ENCODE measurements at regions of chr3 and their contacts with region 1.

Region 1: GRCh38 chr3:52820736-52821135 is 9.7 kb downstream of the ITIH4 start:
- DNase-seq: peak; percentile 41 to 84
- H3K4me3 ChIP-seq: no peak overlapping the region
- H3K27ac ChIP-seq: no peak overlapping the region
- H3K4me1 ChIP-seq: peaks cover 0 to 6% (median 3%) of the 10 kb centered on the region in 4 experiments; a peak in 2 of 7 replicates
- H3K27me3 ChIP-seq: no peaks in the 10 kb centered on the region
- CTCF ChIP-seq: peak in 2 of 3 experiments; percentile 90 to 98; a peak in 3 of 4 replicates
- EP300 ChIP-seq: no peak
- POLR2A ChIP-seq: no peak
- RAD21 ChIP-seq: peak; percentile 67 to 76

Region 2: DNA sequence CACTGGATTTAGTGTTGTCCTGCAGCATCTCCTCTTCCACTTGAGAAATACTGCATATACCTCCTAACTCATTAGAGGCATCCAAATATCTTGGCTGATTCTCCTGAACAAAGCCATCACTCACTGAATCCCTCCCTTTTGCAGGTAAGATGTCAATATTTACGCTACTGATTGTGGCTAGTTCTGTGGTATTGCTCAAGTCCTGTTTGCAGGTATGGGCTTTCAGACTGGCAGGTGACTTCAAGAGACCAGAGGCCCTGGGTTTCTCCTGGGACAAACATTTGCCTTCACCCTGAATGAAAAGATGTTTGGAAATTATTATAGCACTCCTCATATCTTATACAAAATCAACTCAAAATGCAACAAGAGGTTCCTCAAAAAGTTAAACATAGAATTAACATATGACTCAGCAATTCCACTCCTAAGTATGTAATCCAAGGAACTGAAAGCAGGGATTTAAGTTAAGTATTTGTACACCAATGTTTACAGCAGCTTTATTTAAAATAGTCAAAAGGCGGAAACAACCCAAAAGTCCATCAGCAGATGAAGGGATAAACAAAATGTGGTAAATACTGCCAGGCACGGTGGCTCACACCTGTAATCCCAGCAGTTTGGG is 68.6 kb before region 1 on chr3:
- CTCF ChIA-PET with region 1: interaction called, 10 read pairs
- POLR2A ChIA-PET with region 1: no interaction called
- DNase-seq: no peak
- H3K4me3 ChIP-seq: no peak overlapping the region
- H3K27ac ChIP-seq: no peak overlapping the region
- H3K4me1 ChIP-seq: no peaks in the 10 kb centered on the region
- H3K27me3 ChIP-seq: no peaks in the 10 kb centered on the region
- CTCF ChIP-seq: no peak
- EP300 ChIP-seq: no peak
- POLR2A ChIP-seq: no peak
- RAD21 ChIP-seq: no peak

Region 3: GRCh38 chr3:52792961-52793695 is 27.6 kb before region 1 on chr3:
- CTCF ChIA-PET with region 1: interaction called, 86 read pairs
- POLR2A ChIA-PET with region 1: no interaction called
- DNase-seq: no peak
- H3K4me3 ChIP-seq: no peak overlapping the region
- H3K27ac ChIP-seq: no peak overlapping the region
- H3K4me1 ChIP-seq: no peaks in the 10 kb centered on the region
- H3K27me3 ChIP-seq: no peaks in the 10 kb centered on the region
- CTCF ChIP-seq: no peak
- EP300 ChIP-seq: no peak
- POLR2A ChIP-seq: no peak
- RAD21 ChIP-seq: no peak

Region 4: GRCh38 chr3:52798978-52799476 is 21.7 kb before region 1 on chr3:
- CTCF ChIA-PET with region 1: interaction called, 86 read pairs
- POLR2A ChIA-PET with region 1: interaction called, 5 read pairs
- DNase-seq: peak; percentile 44 to 87
- H3K4me3 ChIP-seq: no peak overlapping the region
- H3K27ac ChIP-seq: no peak overlapping the region
- H3K4me1 ChIP-seq: no peaks in the 10 kb centered on the region
- H3K27me3 ChIP-seq: no peaks in the 10 kb centered on the region
- CTCF ChIP-seq: peak in 2 of 3 experiments; percentile 74 to 86; a peak in 3 of 4 replicates
- EP300 ChIP-seq: no peak
- POLR2A ChIP-seq: no peak
- RAD21 ChIP-seq: peak; percentile 60 to 64

Region 5: DNA sequence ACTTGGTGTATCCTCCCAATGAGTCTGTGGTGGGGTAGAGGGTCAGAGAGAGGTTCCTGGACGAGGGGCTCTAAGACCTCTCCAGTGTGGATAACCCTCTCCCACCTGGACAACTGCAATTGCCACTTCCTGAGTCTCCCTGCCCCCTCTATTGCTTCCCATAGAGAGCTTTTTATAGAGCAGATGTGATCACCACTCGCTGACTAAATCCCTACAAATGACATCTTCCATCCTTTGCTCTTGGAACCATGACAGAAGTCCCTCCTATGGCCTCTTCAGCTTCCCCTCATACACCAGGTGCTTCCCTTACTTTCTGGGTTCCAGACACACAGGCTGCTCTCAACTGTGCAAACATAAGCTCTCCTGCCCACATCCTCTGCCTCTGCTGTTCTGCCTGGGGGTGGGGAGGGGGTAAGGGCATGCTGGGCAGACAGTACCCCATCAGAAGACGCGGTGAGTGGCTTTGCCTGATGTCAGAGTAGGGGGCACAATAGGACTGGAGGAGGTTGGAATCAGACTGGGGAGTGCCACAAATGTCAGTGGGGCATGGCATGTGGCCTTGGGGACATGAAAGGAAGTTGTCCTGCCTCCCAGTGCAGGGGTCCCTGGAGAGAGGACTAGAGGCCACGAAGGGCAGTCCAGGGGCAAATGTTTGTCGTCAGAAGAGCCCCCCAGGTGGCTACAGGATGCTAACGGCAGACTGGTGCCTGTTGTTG is 10.9 kb before region 1 on chr3:
- CTCF ChIA-PET with region 1: interaction called, 33 read pairs
- POLR2A ChIA-PET with region 1: interaction called, 4 read pairs
- DNase-seq: no peak
- H3K4me3 ChIP-seq: no peak overlapping the region
- H3K27ac ChIP-seq: no peak overlapping the region
- H3K4me1 ChIP-seq: no peaks in the 10 kb centered on the region
- H3K27me3 ChIP-seq: no peaks in the 10 kb centered on the region; a peak in 1 of 7 replicates
- CTCF ChIP-seq: no peak
- EP300 ChIP-seq: no peak
- POLR2A ChIP-seq: no peak
- RAD21 ChIP-seq: no peak

Region 6: DNA sequence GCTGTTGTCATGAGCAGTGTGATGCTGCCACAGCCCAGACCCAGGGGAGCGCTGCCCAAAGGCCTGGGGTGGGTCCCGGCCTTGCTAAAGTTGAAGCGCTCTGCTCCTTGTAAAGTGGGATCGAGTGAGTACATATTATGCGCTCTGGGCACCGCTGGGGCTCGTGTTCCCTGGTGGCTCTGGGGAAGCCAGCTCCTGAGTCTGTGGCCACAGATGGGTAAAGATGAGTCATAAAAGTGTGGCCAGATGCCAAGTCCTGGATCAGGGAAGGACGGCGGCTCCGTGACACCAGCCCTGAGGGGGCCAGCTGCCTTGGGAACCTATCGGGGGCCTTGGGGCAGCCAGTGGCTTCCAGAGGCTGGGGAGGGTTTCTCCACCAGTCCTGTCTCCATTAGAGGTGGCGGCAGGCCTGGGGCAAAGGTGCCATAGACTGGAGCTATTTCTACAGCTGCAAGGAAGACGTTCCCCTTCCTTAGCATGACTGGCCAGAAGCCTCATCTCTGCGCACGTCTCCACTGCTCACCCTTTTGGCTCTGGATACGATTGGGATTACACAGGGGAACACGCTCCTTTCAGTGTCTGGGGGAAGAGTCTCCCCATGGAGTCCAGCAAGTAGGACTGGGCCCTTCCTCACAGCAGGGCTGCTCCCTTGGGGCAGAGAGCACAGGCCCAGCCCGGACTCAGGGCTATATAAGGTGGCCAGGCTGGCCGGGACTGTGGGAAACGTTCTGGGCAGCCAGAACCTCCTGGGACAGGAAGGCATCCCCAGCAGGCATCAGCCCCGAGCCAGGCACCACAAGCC is 11.0 kb after region 1 on chr3:
- CTCF ChIA-PET with region 1: interaction called, 73 read pairs
- POLR2A ChIA-PET with region 1: interaction called, 8 read pairs
- DNase-seq: no peak
- H3K4me3 ChIP-seq: no peak overlapping the region
- H3K27ac ChIP-seq: no peak overlapping the region; the same call in 1 of the 2 replicates
- H3K4me1 ChIP-seq: peaks cover 0 to 12% (median 2%) of the 10 kb centered on the region in 4 experiments; a peak in 3 of 7 replicates
- H3K27me3 ChIP-seq: no peaks in the 10 kb centered on the region
- CTCF ChIP-seq: no peak
- EP300 ChIP-seq: no peak
- POLR2A ChIP-seq: no peak
- RAD21 ChIP-seq: no peak

Region 7: DNA sequence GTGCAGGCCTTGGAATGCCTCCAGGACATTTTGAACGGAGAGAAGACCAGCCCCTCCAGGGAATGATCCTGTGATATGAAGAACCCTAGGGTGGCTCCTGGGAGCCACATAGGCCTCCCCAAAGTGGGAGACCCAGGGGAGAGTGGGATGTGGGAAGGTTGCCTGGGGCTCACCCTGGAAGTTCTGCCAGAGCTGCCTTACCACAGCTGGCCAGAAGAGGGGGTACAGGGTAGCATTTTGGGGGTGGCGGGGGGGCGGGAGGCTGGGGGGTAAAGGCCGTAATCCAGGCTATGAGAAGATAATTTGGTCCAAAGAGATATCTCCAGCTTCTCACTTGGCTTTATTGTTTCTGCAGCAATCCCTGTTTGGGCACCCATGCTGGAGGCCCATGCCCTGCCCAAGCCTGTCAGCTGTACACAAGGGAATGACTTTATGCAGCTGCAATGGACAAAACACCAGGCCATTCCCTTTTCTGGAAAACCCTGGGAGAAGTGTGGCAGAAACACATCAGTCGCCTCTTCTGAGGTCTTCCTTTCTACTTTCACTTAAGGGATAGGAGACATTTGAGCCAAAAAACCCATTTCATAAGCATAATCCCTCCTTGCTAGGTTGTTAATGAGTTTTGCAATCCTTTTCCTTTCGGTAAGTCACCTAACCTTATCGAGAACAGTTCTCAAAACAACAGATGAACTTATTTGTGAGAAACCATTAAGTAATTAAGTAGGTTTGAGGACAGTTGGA is 25.1 kb after region 1 on chr3:
- CTCF ChIA-PET with region 1: interaction called, 15 read pairs
- POLR2A ChIA-PET with region 1: no interaction called
- DNase-seq: peak in 1 of 2 experiments; percentile 79
- H3K4me3 ChIP-seq: no peak overlapping the region
- H3K27ac ChIP-seq: no peak overlapping the region
- H3K4me1 ChIP-seq: no peaks in the 10 kb centered on the region
- H3K27me3 ChIP-seq: no peaks in the 10 kb centered on the region
- CTCF ChIP-seq: peak; percentile 20 to 61 (median 40); a peak in 3 of 4 replicates
- EP300 ChIP-seq: no peak
- POLR2A ChIP-seq: no peak
- RAD21 ChIP-seq: peak; percentile 15 to 30; a peak in 2 of 4 replicates

Measured in H1 (cell line).